ENCODE measurements at regions of chr1 and their contacts with region 1.

Region 1: GRCh38 chr1:151024540-151025146 is 11.7 kb upstream of the BNIPL start:
- DNase-seq: peak; percentile 92
- ATAC-seq: peak; percentile 100
- H3K4me3 Mint-ChIP-seq: peak overlapping the region; percentile 45
- H3K27ac Mint-ChIP-seq: peak overlapping the region; percentile 74
- H3K4me1 Mint-ChIP-seq: peaks cover 7% of the 10 kb centered on the region
- H3K27me3 Mint-ChIP-seq: no peaks in the 10 kb centered on the region

Region 2: DNA sequence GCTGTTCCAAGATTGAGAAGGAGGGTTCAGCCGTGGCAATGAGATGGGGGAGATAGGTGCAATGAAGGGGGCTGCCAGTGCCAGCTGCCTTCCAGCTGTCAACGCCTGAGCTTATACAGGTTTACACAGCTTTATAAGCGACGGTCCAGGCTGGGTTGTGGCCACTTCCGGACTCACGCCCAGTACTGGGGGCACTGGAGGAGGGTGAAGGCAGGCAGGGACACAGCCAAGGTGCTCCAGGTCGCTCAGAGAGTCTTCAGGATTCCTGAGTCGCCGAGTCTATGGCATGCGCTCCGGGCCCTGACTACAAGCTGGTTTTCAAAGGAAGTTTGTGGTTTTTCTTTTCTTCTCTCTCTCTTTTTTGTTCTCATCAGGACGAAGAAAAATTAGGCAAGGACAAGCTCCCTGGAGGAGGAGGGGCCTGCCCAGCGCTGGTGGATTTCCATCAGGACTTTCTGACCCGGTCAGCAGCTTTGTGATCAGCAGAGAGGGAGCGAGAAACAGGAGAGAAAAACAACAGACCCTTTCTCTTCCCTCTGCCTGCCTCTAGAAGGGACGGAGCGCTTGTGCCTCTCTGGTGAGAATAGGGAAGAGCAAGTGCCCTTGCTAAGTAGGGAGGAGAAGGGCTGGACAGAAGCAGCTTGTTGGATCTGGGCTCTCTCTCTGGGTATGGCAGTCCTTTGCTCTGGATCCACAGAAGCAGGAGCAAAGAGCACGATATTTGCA is 18.2 kb before region 1 on chr1 and contains the start of gene MINDY1:
- CTCF ChIA-PET with region 1: interaction called, 11 read pairs
- POLR2A ChIA-PET with region 1: no interaction called
- DNase-seq: peak; percentile 53
- ATAC-seq: peak; percentile 25
- H3K4me3 Mint-ChIP-seq: peak within 1 kb of the TSS; percentile 98
- H3K27ac Mint-ChIP-seq: peak within 1 kb of the TSS; percentile 91
- H3K4me1 Mint-ChIP-seq: peaks cover 86% of the 10 kb centered on the region
- H3K27me3 Mint-ChIP-seq: no peaks in the 10 kb centered on the region
- total RNA-seq, gene MINDY1: 9.1 to 9.9 TPM

Region 3: GRCh38 chr1:151035167-151035566 is 10.5 kb after region 1 on chr1:
- CTCF ChIA-PET with region 1: interaction called, 13 read pairs
- POLR2A ChIA-PET with region 1: no interaction called
- DNase-seq: no peak
- ATAC-seq: no peak
- H3K4me3 Mint-ChIP-seq: no peak overlapping the region
- H3K27ac Mint-ChIP-seq: no peak overlapping the region
- H3K4me1 Mint-ChIP-seq: no peaks in the 10 kb centered on the region
- H3K27me3 Mint-ChIP-seq: no peaks in the 10 kb centered on the region

Region 4: GRCh38 chr1:151047925-151048645 is 23.4 kb after region 1 on chr1:
- CTCF ChIA-PET with region 1: interaction called, 60 read pairs
- POLR2A ChIA-PET with region 1: interaction called, 3 read pairs
- DNase-seq: peak; percentile 78
- ATAC-seq: peak; percentile 80
- H3K4me3 Mint-ChIP-seq: peak overlapping the region; percentile 89
- H3K27ac Mint-ChIP-seq: peak overlapping the region; percentile 90
- H3K4me1 Mint-ChIP-seq: peaks cover 48% of the 10 kb centered on the region
- H3K27me3 Mint-ChIP-seq: no peaks in the 10 kb centered on the region

Region 5: DNA sequence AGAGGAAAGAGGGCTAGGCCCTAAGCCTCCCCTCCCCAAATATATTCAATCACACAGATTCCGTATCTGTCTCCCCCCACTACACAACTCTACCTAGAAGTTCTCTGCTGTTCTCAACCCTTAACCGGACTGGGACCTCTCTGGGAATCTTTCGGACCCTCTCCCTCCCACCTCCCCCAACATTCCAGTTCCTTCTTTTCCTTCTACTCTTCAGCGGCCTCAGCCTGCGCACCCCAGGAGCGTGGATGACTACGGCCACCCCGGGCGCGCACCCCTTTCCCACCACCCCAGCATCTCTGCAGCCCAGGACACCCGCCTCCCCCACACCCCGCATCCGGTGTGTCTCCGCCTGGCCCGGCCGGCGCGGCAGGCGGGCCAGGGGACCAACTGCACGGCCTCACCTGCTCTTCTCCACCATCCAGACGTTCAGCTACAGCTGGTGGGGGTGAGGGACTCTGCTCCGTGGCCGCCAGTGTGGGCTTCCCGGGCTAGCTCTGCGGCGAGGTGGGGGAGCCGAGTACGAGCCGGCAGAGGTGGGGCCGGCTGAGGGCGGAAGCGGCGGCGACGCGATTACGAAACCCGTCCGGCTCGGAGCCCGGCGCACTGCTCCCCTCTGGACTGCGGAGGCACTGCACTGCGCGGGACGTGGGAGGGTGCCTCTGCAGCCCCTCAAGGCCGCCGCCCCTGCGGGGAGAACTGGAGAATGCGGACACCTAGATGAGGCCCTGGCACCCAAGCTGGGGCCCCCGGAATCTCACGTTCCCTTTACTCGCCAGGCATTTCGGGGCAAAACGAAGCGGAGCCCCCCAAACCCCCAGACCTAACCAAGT is 34.6 kb after region 1 on chr1 and contains the start of gene CDC42SE1:
- CTCF ChIA-PET with region 1: interaction called, 31 read pairs
- POLR2A ChIA-PET with region 1: interaction called, 3 read pairs
- DNase-seq: peak; percentile 91
- ATAC-seq: peak; percentile 78
- H3K4me3 Mint-ChIP-seq: peak within 1 kb of the TSS; percentile 94
- H3K27ac Mint-ChIP-seq: peak within 1 kb of the TSS; percentile 96
- H3K4me1 Mint-ChIP-seq: peaks cover 56% of the 10 kb centered on the region
- H3K27me3 Mint-ChIP-seq: no peaks in the 10 kb centered on the region
- total RNA-seq, gene CDC42SE1: 238 to 245 TPM

Region 6: DNA sequence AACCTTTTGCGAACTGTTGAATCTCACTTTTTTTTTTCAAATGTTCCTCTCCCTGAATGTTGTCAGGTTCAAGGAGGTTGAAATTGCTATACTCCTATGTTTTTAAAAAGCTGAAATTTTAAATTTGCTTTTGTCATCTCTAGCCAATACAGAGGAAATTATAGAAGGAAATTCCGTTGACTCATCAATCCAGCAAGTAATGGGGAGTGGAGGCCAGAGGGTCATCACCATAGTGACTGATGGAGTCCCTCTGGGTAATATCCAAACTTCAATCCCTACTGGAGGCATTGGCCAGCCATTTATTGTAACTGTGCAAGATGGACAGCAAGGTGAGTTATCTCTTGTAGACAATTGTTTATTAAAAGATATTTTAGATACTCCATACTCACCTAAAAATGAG is 82.3 kb after region 1 on chr1:
- CTCF ChIA-PET with region 1: interaction called, 14 read pairs
- POLR2A ChIA-PET with region 1: no interaction called
- DNase-seq: no peak
- ATAC-seq: no peak
- H3K4me3 Mint-ChIP-seq: no peak overlapping the region
- H3K27ac Mint-ChIP-seq: no peak overlapping the region
- H3K4me1 Mint-ChIP-seq: no peaks in the 10 kb centered on the region
- H3K27me3 Mint-ChIP-seq: no peaks in the 10 kb centered on the region

Region 7: DNA sequence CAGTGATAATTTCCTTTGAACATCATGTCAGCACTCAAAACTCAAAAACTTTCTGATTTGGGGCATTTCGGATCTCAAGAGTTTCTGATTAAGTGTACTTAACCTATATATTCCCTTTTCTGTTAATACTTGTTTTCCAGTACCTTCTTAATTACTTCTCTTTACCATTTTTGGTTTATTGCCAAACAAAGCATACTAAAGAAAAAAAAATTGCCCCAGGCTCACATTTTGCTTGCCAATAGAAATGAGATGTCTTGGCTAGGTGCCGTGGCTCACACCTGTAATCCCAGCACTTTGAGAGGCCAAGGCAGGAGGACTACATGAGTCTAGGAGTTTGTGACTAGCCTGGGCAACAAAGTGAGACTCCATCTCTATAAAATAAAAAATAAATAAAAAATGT is 234.7 kb after region 1 on chr1:
- CTCF ChIA-PET with region 1: no interaction called
- POLR2A ChIA-PET with region 1: no interaction called
- DNase-seq: no peak
- ATAC-seq: no peak
- H3K4me3 Mint-ChIP-seq: no peak overlapping the region
- H3K27ac Mint-ChIP-seq: no peak overlapping the region
- H3K4me1 Mint-ChIP-seq: peaks cover 24% of the 10 kb centered on the region
- H3K27me3 Mint-ChIP-seq: no peaks in the 10 kb centered on the region